ENCODE measurements at regions of chrX and their contacts with region 1.

Region 1: DNA sequence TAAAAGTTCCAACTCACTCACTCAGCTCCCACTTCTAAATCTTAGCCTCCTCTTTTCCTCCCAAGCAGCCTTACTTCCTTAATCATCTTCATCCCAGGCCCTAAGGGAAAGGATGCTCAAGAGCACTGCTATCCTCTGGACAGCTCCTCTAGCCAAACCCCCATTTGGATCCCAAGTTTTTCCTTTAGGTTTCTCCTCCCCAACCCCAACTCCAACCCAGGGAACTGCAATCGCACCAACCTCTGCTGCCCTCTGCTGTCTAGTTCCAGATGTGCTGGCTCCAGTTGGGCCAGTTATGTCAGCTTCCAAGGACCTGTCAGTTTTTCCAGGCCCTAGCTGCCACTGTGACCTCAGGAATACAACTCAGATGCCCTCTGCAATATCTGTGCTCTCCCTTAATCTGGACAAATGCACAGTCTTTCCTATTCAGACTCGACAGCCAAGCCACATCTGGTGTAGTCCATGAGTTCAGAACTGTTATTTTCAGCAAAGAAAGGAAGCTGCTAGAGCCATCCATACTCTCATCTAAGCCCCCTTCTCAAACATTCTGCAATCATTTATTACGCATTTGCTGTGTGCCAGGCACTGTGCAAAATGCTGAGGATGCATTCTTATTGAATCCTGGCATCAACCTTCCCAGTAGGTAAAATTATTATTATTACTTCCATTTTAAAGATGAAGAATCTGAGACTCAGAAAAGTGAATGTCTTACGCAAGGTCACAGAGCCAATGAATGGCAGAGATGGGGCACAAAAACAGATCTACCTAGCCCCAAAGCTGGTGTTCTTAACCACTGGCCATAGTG is 12.3 kb upstream of the XPNPEP2 start:
- DNase-seq: peak; percentile 34
- H3K4me3 ChIP-seq: no peak overlapping the region
- H3K27ac ChIP-seq: no peak overlapping the region
- H3K4me1 ChIP-seq: no peaks in the 10 kb centered on the region
- H3K27me3 ChIP-seq: no peaks in the 10 kb centered on the region
- CTCF ChIP-seq: peak; percentile 65 to 84

Region 2: GRCh38 chrX:129600981-129601424 is 125.5 kb before region 1 on chrX:
- CTCF ChIA-PET with region 1: no interaction called
- dilution Hi-C with region 1: no loop called
- in situ Hi-C with region 1: loop called in 1 of 2 experiments (anchors 5 kb)
- intact Hi-C with region 1: no loop called
- DNase-seq: peak; percentile 30
- H3K4me3 ChIP-seq: no peak overlapping the region
- H3K27ac ChIP-seq: no peak overlapping the region
- H3K4me1 ChIP-seq: peaks cover 16% of the 10 kb centered on the region
- H3K27me3 ChIP-seq: no peaks in the 10 kb centered on the region
- CTCF ChIP-seq: peak; percentile 67 to 72

Region 3: DNA sequence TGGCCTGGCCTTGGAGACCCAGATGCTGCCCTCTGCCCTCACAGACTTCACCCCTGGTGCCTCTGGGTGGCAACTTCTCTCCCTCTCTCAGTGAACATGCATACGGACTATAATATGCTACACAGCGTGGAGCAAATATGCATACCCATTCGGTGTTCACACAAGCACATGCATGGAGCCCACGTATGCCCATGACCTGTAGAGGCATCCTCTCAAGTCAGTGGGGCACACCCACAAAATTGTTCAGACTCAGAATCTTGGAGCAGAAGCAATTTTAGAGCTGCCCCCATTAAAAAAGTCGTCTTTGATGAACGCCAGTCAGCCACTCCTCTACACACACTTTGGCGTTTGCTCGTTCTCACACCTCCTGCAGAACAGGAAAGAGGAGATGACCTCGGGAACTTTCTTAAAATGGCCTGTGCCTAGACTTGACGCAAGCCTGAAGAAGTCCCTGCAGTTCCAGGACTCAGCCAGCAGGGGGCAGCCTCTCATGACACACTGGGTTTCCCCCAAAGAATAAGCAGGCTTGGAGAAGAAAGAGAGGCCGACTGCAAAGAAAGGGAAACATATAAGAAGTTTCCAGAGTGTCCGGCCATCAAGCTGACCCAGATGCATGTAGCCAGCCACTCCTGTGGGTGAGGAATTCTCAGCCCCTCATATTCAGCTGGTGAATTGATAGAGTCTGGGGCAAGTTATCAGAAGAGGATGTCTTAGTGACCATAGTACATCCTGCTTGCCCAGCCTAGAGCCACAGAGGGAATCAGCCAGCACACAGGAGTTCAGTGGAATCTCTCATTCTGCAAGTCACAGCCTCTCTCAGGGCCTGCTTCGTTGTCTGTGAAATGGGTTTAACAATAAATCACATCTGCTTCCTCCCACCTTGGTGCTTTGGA is 89.0 kb before region 1 on chrX:
- CTCF ChIA-PET with region 1: no interaction called
- dilution Hi-C with region 1: loop called (anchors 5 kb)
- in situ Hi-C with region 1: no loop called
- intact Hi-C with region 1: loop called (anchors 1 kb)
- DNase-seq: peak; percentile 40
- H3K4me3 ChIP-seq: no peak overlapping the region
- H3K27ac ChIP-seq: no peak overlapping the region
- H3K4me1 ChIP-seq: peaks cover 5% of the 10 kb centered on the region
- H3K27me3 ChIP-seq: no peaks in the 10 kb centered on the region
- CTCF ChIP-seq: peak; percentile 92 to 96

Region 4: DNA sequence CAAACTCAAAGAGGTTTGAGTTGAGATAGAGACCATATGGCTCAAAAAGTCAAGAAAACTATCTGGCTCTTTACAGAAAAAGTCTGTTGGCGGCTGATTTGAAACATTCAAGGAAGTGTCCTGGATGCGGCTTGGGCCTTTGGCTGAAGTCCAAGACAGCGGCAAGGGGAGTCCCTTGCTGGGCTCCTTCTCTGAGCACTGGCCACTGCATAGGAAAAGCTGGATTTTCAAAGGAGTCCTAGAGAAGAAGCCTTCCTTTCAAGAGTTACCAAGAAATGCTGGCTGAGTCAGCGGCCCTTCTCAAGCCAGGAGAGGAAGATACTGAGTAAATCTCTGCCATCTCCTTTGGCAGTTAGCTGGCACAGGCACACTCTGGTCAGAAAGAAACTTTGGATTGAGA is 83.9 kb before region 1 on chrX:
- CTCF ChIA-PET with region 1: no interaction called
- dilution Hi-C with region 1: loop called (anchors 5 kb)
- in situ Hi-C with region 1: no loop called
- intact Hi-C with region 1: loop called (anchors 1 kb)
- DNase-seq: no peak
- H3K4me3 ChIP-seq: no peak overlapping the region
- H3K27ac ChIP-seq: no peak overlapping the region
- H3K4me1 ChIP-seq: peaks cover 5% of the 10 kb centered on the region
- H3K27me3 ChIP-seq: no peaks in the 10 kb centered on the region
- CTCF ChIP-seq: no peak

Region 5: GRCh38 chrX:129654419-129655165 is 71.9 kb before region 1 on chrX and contains the start of gene APLN:
- CTCF ChIA-PET with region 1: no interaction called
- dilution Hi-C with region 1: no loop called
- in situ Hi-C with region 1: loop called in 1 of 2 experiments (anchors 10 kb)
- intact Hi-C with region 1: loop called (anchors 1 kb)
- DNase-seq: peak; percentile 30
- H3K4me3 ChIP-seq: peak within 1 kb of the TSS in 2 of 3 experiments; percentile 33 to 41
- H3K27ac ChIP-seq: no peak within 1 kb of the TSS
- H3K4me1 ChIP-seq: peaks cover 9% of the 10 kb centered on the region
- H3K27me3 ChIP-seq: no peaks in the 10 kb centered on the region
- CTCF ChIP-seq: peak in 1 of 2 donors; percentile 8
- total RNA-seq, gene APLN: under 0.01 to 0.21 TPM

Region 6: DNA sequence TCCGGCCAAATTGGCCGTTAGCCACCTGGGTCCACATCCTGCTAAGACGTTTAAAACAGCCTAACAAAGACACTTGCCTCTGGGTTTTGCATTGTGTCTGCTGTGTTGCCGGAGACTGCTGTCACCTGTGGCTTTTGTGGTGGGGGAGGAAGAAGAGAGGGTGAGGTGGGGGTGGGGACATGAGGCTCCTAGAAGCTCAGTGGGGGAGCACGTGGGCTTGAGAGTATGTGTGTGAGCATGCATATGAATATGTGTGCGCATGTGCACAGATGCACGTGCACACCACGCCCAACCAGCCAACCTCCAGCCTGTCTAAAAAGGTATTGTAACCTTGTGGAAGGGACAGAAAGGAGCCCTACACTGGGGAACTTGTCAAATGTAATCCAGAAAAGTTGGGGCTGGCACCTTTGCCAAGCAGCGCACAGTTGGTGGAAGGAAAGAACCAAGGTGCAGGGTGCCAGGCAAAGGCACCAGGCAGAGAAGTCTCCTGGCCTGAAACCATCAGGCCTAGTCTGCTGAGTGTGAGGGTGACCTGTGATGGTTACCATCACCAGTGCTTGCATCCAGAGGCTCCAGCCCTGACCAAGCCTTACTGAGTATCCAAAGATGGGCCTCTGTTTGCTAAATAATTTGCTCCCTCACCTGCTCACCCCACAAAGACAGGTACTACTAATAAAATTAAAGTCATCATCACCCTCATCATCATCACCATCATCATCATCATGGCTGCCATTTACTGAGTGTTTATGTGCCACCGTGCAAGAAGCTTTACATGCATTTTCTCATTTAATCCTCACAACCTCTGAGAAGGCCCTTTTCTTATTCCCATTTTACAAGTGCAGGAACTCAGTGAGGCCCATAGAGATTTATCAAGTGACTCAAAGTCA is 43.2 kb after region 1 on chrX:
- CTCF ChIA-PET with region 1: no interaction called
- dilution Hi-C with region 1: no loop called
- in situ Hi-C with region 1: no loop called
- intact Hi-C with region 1: no loop called
- DNase-seq: no peak
- H3K4me3 ChIP-seq: no peak overlapping the region
- H3K27ac ChIP-seq: no peak overlapping the region
- H3K4me1 ChIP-seq: no peaks in the 10 kb centered on the region
- H3K27me3 ChIP-seq: no peaks in the 10 kb centered on the region
- CTCF ChIP-seq: no peak

Region 7: GRCh38 chrX:129823115-129823514 is 96.6 kb after region 1 on chrX:
- CTCF ChIA-PET with region 1: no interaction called
- dilution Hi-C with region 1: no loop called
- in situ Hi-C with region 1: no loop called
- intact Hi-C with region 1: loop called (anchors 5 kb)
- DNase-seq: peak; percentile 12
- H3K4me3 ChIP-seq: no peak overlapping the region
- H3K27ac ChIP-seq: no peak overlapping the region
- H3K4me1 ChIP-seq: no peaks in the 10 kb centered on the region
- H3K27me3 ChIP-seq: no peaks in the 10 kb centered on the region
- CTCF ChIP-seq: peak; percentile 49 to 53